ENCODE measurements at regions of chr15 and their contacts with region 1.

Region 1: DNA sequence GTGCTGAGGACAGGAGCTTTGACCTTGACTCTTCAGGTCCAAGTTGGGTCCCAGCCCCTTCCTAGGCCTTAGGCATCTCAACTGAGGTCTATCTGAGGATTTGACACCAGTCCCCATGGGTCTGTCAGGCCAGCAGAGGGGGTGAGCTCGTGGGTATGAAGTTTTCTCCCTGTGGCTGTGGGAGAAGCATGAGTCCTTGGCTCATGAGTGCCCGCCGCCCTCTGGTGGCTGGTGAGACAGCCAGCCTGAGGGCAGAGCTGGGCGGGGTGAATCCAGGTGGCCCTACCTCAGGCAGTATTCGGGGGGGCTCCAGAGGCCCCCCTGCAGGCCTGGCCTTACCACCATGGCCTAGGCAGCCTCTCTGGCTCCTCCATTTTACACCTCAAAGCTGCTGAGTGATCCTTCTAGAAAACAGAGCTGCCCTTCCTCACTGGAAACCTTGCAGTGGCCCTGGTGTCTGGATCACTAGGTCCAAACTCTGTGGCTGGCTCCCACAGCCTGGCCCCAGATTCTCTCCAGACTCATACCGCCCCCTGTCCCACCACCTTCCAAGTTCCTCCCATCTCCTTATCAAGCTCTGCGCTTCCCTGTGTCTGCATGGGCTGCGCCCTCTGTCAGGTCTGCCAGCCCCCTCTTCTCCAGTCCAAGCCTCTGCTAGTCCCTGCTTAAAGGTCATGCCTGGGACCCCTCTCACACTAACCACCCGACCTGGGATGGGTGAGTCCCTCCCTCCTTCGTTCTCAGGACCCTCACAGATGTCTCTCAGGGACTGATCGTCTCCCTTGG is 16.1 kb downstream of the SH2D7 start:
- DNase-seq: peak; percentile 77 to 93
- ATAC-seq: peak; percentile 72 to 81 (median 76)
- H3K4me3 ChIP-seq: no peak overlapping the region
- H3K4me3 Mint-ChIP-seq: no peak overlapping the region
- H3K27ac ChIP-seq: no peak overlapping the region
- H3K27ac Mint-ChIP-seq: no peak overlapping the region
- H3K4me1 ChIP-seq: peaks cover 55% of the 10 kb centered on the region
- H3K4me1 Mint-ChIP-seq: peaks cover 39 to 42% of the 10 kb centered on the region in 2 donors
- H3K27me3 ChIP-seq: no peaks in the 10 kb centered on the region
- H3K27me3 Mint-ChIP-seq: no peaks in the 10 kb centered on the region
- CTCF ChIP-seq: peak; percentile 91

Region 2: GRCh38 chr15:77959432-77959879 is 149.0 kb before region 1 on chr15:
- intact Hi-C with region 1: loop called (anchors 1 kb)
- DNase-seq: peak; percentile 66 to 80
- ATAC-seq: peak; percentile 90 to 100 (median 99)
- H3K4me3 ChIP-seq: no peak overlapping the region
- H3K4me3 Mint-ChIP-seq: no peak overlapping the region
- H3K27ac ChIP-seq: no peak overlapping the region
- H3K27ac Mint-ChIP-seq: no peak overlapping the region
- H3K4me1 ChIP-seq: peaks cover 6% of the 10 kb centered on the region
- H3K4me1 Mint-ChIP-seq: peaks cover 7 to 11% of the 10 kb centered on the region in 2 donors
- H3K27me3 ChIP-seq: no peaks in the 10 kb centered on the region
- H3K27me3 Mint-ChIP-seq: peaks cover 17 to 50% of the 10 kb centered on the region in 2 donors
- CTCF ChIP-seq: peak; percentile 93

Region 3: GRCh38 chr15:78000091-78000926 is 108.2 kb before region 1 on chr15:
- intact Hi-C with region 1: loop called (anchors 1 kb)
- DNase-seq: peak; percentile 66 to 88
- ATAC-seq: peak; percentile 93 to 100 (median 98)
- H3K4me3 ChIP-seq: no peak overlapping the region
- H3K4me3 Mint-ChIP-seq: no peak overlapping the region
- H3K27ac ChIP-seq: no peak overlapping the region
- H3K27ac Mint-ChIP-seq: peak overlapping the region in 1 of 2 donors; percentile 83
- H3K4me1 ChIP-seq: no peaks in the 10 kb centered on the region
- H3K4me1 Mint-ChIP-seq: peaks cover 6 to 12% of the 10 kb centered on the region in 2 donors
- H3K27me3 ChIP-seq: no peaks in the 10 kb centered on the region
- H3K27me3 Mint-ChIP-seq: no peaks in the 10 kb centered on the region
- CTCF ChIP-seq: peak; percentile 42

Region 4: DNA sequence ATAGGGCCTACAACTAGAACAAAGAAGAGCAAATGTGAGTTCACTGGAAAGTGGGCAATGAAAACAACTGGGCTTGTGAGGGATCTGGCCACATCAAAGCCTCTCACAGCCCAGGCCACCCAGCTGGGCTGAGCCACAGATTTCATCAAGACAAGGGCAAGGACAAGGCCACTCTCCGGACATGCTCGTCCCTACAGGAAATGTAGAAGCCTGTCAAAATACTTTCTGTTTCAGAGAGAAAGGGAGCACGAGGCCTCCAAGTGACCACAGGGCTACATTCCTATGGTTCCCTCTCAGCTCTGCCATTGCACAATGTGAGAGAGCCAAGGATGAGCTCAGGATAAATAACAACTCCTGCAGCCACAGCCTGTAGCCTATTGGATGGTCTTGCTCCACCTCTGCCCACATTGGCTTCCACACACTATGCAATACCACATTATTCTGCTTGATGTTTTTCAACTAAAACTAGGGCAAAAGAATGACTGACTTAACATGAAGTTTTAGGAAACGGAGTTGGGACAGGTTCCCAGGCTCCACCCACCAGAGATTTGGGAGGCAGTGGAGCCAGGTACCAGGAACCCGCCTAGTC is 43.1 kb before region 1 on chr15:
- intact Hi-C with region 1: loop called (anchors 5 kb)
- DNase-seq: peak in 1 of 2 donors; percentile 55
- ATAC-seq: peak in 2 of 3 donors; percentile 11 to 41
- H3K4me3 ChIP-seq: no peak overlapping the region
- H3K4me3 Mint-ChIP-seq: no peak overlapping the region
- H3K27ac ChIP-seq: peak overlapping the region; percentile 54
- H3K27ac Mint-ChIP-seq: no peak overlapping the region
- H3K4me1 ChIP-seq: peaks cover 60% of the 10 kb centered on the region
- H3K4me1 Mint-ChIP-seq: peaks cover 14 to 15% of the 10 kb centered on the region in 2 donors
- H3K27me3 ChIP-seq: no peaks in the 10 kb centered on the region
- H3K27me3 Mint-ChIP-seq: no peaks in the 10 kb centered on the region
- CTCF ChIP-seq: no peak

Region 5: GRCh38 chr15:78204351-78205309 is 96.1 kb after region 1 on chr15:
- intact Hi-C with region 1: no loop called
- DNase-seq: no peak
- ATAC-seq: no peak
- H3K4me3 ChIP-seq: no peak overlapping the region
- H3K4me3 Mint-ChIP-seq: no peak overlapping the region
- H3K27ac ChIP-seq: no peak overlapping the region
- H3K27ac Mint-ChIP-seq: no peak overlapping the region
- H3K4me1 ChIP-seq: no peaks in the 10 kb centered on the region
- H3K4me1 Mint-ChIP-seq: no peaks in the 10 kb centered on the region
- H3K27me3 ChIP-seq: no peaks in the 10 kb centered on the region
- H3K27me3 Mint-ChIP-seq: peaks cover 0 to 2% of the 10 kb centered on the region in 2 donors
- CTCF ChIP-seq: no peak

Region 6: DNA sequence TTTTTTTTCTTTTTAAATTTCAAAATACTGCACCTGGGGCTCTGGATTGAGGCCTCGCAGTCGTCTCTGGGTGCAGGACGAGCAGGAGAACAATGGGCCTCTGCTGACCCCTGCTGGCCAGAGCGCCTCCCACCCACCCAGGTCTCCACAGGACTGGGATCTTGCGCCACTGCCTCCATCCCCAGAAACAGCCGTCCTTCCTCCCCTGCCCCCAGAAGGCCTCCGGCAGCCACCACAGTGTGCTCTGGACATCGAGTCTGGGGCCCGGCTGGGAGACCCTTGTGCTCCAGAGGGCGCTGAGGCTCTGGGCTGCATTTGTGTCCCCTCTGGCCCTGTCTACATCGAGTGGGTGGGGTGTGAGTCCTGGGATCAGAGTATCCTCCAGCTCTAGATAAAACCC is 132.5 kb after region 1 on chr15:
- intact Hi-C with region 1: loop called (anchors 1 kb)
- DNase-seq: peak; percentile 75 to 87
- ATAC-seq: peak; percentile 83 to 97 (median 95)
- H3K4me3 ChIP-seq: no peak overlapping the region
- H3K4me3 Mint-ChIP-seq: no peak overlapping the region
- H3K27ac ChIP-seq: no peak overlapping the region
- H3K27ac Mint-ChIP-seq: no peak overlapping the region
- H3K4me1 ChIP-seq: no peaks in the 10 kb centered on the region
- H3K4me1 Mint-ChIP-seq: no peaks in the 10 kb centered on the region
- H3K27me3 ChIP-seq: no peaks in the 10 kb centered on the region
- H3K27me3 Mint-ChIP-seq: no peaks in the 10 kb centered on the region
- CTCF ChIP-seq: peak; percentile 80